ENCODE measurements at regions of chrX and their contacts with region 1.

Region 1: GRCh38 chrX:140572724-140573123 is 67.9 kb upstream of the SOX3 start:
- DNase-seq: peak; percentile 24 to 36
- H3K4me3 ChIP-seq: no peak overlapping the region
- H3K4me3 Mint-ChIP-seq: no peak overlapping the region
- H3K27ac Mint-ChIP-seq: no peak overlapping the region
- H3K4me1 ChIP-seq: no peaks in the 10 kb centered on the region
- H3K4me1 Mint-ChIP-seq: no peaks in the 10 kb centered on the region
- H3K27me3 ChIP-seq: no peaks in the 10 kb centered on the region
- H3K27me3 Mint-ChIP-seq: no peaks in the 10 kb centered on the region
- CTCF ChIP-seq: peak; percentile 51 to 63

Region 2: GRCh38 chrX:140602140-140602539 is 29.4 kb after region 1 on chrX:
- CTCF ChIA-PET with region 1: no interaction called
- POLR2A ChIA-PET with region 1: no interaction called
- intact Hi-C with region 1: no loop called
- DNase-seq: no peak
- H3K4me3 ChIP-seq: no peak overlapping the region
- H3K4me3 Mint-ChIP-seq: no peak overlapping the region
- H3K27ac Mint-ChIP-seq: no peak overlapping the region
- H3K4me1 ChIP-seq: no peaks in the 10 kb centered on the region
- H3K4me1 Mint-ChIP-seq: no peaks in the 10 kb centered on the region
- H3K27me3 ChIP-seq: no peaks in the 10 kb centered on the region
- H3K27me3 Mint-ChIP-seq: peaks cover 2% of the 10 kb centered on the region
- CTCF ChIP-seq: no peak

Region 3: GRCh38 chrX:140664939-140665338 is 92.2 kb after region 1 on chrX:
- CTCF ChIA-PET with region 1: no interaction called
- POLR2A ChIA-PET with region 1: no interaction called
- intact Hi-C with region 1: loop called (anchors 1 kb)
- DNase-seq: peak in 1 of 2 experiments; percentile 1
- H3K4me3 ChIP-seq: no peak overlapping the region
- H3K4me3 Mint-ChIP-seq: no peak overlapping the region
- H3K27ac Mint-ChIP-seq: no peak overlapping the region
- H3K4me1 ChIP-seq: no peaks in the 10 kb centered on the region
- H3K4me1 Mint-ChIP-seq: no peaks in the 10 kb centered on the region
- H3K27me3 ChIP-seq: no peaks in the 10 kb centered on the region
- H3K27me3 Mint-ChIP-seq: peaks cover 9% of the 10 kb centered on the region
- CTCF ChIP-seq: no peak

Region 4: GRCh38 chrX:140733769-140734342 is 161.1 kb after region 1 on chrX:
- CTCF ChIA-PET with region 1: no interaction called
- POLR2A ChIA-PET with region 1: no interaction called
- intact Hi-C with region 1: loop called (anchors 1 kb)
- DNase-seq: peak in 1 of 2 experiments; percentile 17
- H3K4me3 ChIP-seq: no peak overlapping the region
- H3K4me3 Mint-ChIP-seq: no peak overlapping the region
- H3K27ac Mint-ChIP-seq: no peak overlapping the region
- H3K4me1 ChIP-seq: no peaks in the 10 kb centered on the region
- H3K4me1 Mint-ChIP-seq: no peaks in the 10 kb centered on the region
- H3K27me3 ChIP-seq: no peaks in the 10 kb centered on the region
- H3K27me3 Mint-ChIP-seq: peaks cover 3% of the 10 kb centered on the region
- CTCF ChIP-seq: peak; percentile 33 to 65